Colonic mucosa (tissue), 4 donors: ENCODE measurements at regions of chr1 and their contacts with region 1.

Region 1: GRCh38 chr1:233025157-233025915 is 74.9 kb downstream of the NTPCR start:
- DNase-seq: peak; percentile 77
- H3K4me3 ChIP-seq: no peak overlapping the region
- H3K27ac ChIP-seq: no peak overlapping the region
- H3K4me1 ChIP-seq: no peaks in the 10 kb centered on the region
- H3K27me3 ChIP-seq: no peaks in the 10 kb centered on the region
- CTCF ChIP-seq: peak; percentile 50

Region 2: DNA sequence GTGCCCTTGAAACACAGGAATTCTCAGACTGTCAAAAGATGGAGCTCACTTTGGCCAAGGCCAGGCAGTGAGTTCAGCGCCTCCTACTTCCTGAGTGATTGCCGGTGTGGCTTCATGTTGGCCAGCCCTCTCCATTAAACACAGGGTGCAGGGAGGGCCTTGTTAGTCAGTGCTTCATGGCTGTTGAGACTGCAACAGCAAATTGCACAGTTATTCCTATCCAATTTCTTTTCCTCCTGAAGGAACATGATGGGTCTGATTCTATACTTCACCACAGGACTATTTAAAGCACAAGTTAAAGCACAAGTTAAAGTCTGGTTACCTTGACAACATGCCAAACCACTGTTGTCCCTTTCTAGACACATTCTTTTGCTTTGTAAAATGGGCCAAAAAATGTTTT is 552.0 kb before region 1 on chr1:
- intact Hi-C with region 1: no loop called
- DNase-seq: no peak
- H3K4me3 ChIP-seq: no peak overlapping the region
- H3K27ac ChIP-seq: no peak overlapping the region
- H3K4me1 ChIP-seq: no peaks in the 10 kb centered on the region
- H3K27me3 ChIP-seq: no peaks in the 10 kb centered on the region
- CTCF ChIP-seq: no peak

Region 3: DNA sequence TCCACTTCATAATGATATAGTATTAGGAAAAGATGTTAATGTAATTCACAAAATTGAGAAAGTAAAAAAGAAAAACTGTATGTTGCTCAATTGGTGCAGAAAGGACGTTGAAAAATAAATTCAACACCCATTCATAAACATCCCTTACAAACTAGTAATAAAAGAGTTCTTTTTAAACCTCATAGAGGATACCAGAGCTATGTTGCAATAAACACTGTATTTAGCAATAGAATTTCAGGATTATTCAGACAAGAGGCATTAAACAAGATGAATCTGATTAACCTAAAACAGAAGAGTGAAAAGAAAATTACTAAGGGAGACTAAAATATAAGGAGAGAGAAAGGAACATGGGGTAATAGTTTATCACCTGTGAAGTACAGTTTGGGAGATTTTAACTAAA is 79.9 kb after region 1 on chr1:
- intact Hi-C with region 1: no loop called
- DNase-seq: no peak
- H3K4me3 ChIP-seq: no peak overlapping the region
- H3K27ac ChIP-seq: no peak overlapping the region
- H3K4me1 ChIP-seq: no peaks in the 10 kb centered on the region
- H3K27me3 ChIP-seq: no peaks in the 10 kb centered on the region
- CTCF ChIP-seq: no peak

Region 4: DNA sequence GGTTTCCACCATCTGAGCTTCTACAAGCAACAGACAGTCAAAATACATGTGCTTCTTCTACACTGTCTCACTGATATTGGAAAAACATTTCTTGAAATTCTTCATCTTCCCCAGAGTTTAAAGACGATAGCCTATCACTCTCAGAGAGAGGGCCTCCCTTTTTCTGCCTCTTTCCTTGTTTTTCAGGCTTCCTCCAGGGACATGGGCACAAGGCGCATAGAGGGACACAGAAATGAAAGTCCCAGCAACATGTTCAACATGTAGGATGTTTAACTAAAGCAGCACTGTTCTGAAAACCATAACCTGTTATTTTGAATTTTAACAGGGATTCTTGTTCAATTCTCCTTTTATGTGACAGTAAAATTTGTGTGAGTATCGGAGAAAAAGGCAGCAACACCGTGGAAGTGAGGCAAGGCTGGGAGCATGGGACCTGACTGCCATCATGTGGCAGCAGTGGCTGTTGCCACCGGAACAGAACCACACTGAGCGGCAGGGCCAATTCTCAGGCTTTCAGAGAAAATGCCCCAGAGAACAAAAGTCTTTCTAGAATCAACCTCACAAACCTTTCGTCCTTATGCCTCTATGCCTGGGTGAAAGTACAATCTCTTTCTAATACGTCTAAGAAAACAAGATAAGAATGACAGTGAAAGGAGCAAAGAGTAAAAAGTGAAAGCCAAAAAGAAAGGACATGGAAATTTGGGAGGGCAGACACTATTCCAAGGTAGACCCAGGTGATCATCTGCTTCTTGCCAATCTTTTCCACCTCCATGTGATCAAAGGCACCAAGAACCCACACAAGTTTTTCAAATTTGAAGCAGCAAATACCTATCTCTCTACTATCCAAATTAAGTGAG is 215.7 kb after region 1 on chr1:
- intact Hi-C with region 1: loop called (anchors 10 kb)
- DNase-seq: peak; percentile 76
- H3K4me3 ChIP-seq: no peak overlapping the region
- H3K27ac ChIP-seq: peak overlapping the region; percentile 83
- H3K4me1 ChIP-seq: peaks cover 7% of the 10 kb centered on the region
- H3K27me3 ChIP-seq: no peaks in the 10 kb centered on the region
- CTCF ChIP-seq: peak; percentile 76